ENCODE measurements at regions of chr21 and their contacts with region 1.

Region 1: DNA sequence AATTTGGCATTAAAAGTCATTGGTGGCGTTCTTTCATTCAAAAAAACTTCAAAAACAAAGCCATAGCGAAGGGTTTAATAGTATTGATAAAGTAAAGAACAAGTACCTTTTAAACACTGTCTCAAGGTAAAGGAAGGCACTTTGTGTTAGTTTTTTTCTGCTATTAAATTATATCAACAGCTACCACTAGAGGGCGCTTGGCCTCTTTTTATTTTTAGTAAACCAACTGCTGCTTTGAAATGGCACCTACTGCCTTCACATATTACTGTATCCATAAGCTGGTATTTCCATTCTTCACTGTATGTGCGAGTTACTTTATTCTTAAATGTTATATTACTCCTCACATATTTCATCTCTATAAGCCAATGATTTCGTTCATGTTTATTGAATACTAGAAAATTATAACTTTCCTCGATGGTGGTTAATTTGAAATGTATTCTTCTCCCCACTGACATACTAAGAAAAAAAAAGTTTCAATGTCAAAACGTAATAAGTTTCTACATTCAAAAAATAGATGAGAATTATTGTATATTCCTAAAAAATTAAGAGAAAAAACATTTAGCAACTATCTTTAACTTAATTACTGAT is 125.7 kb upstream of the CXADR start:
- DNase-seq: peak in 3 of 10 donors; percentile 26 to 35 (median 31)

Region 2: GRCh38 chr21:17512253-17513213 is 125.4 kb after region 1 on chr21 and contains the start of gene CXADR:
- intact Hi-C with region 1: loop called (anchors 5 kb)
- DNase-seq: peak; percentile 70 to 98 (median 80)

Region 3: GRCh38 chr21:17554679-17555465 is 167.7 kb after region 1 on chr21:
- intact Hi-C with region 1: loop called (anchors 2 kb)
- DNase-seq: peak in 1 of 10 donors; percentile 20

Region 4: GRCh38 chr21:17585875-17586450 is 198.8 kb after region 1 on chr21:
- intact Hi-C with region 1: loop called (anchors 1 kb)
- DNase-seq: no peak